Natural killer cell (primary cell): ENCODE measurements at regions of chr1 and their contacts with region 1.

Region 1: GRCh38 chr1:162056043-162056442 is 13.4 kb upstream of the NOS1AP start:
- DNase-seq: peak; percentile 26 to 69
- ATAC-seq: peak; percentile 76 to 93 (median 90)
- H3K4me3 ChIP-seq: no peak overlapping the region
- H3K4me3 Mint-ChIP-seq: no peak overlapping the region
- H3K27ac ChIP-seq: no peak overlapping the region
- H3K27ac Mint-ChIP-seq: no peak overlapping the region
- H3K4me1 ChIP-seq: no peaks in the 10 kb centered on the region
- H3K4me1 Mint-ChIP-seq: no peaks in the 10 kb centered on the region
- H3K27me3 ChIP-seq: no peaks in the 10 kb centered on the region
- H3K27me3 Mint-ChIP-seq: peaks cover 0 to 11% of the 10 kb centered on the region in 2 donors
- CTCF ChIP-seq: peak; percentile 75

Region 2: GRCh38 chr1:162276493-162276892 is 220.4 kb after region 1 on chr1:
- intact Hi-C with region 1: loop called (anchors 1 kb)
- DNase-seq: peak in 1 of 2 donors; percentile 9
- ATAC-seq: no peak
- H3K4me3 ChIP-seq: no peak overlapping the region
- H3K4me3 Mint-ChIP-seq: no peak overlapping the region
- H3K27ac ChIP-seq: no peak overlapping the region
- H3K27ac Mint-ChIP-seq: no peak overlapping the region
- H3K4me1 ChIP-seq: no peaks in the 10 kb centered on the region
- H3K4me1 Mint-ChIP-seq: no peaks in the 10 kb centered on the region
- H3K27me3 ChIP-seq: no peaks in the 10 kb centered on the region
- H3K27me3 Mint-ChIP-seq: peaks cover 8 to 10% of the 10 kb centered on the region in 2 donors
- CTCF ChIP-seq: no peak

Region 3: GRCh38 chr1:162391790-162392563 is 335.9 kb after region 1 on chr1:
- intact Hi-C with region 1: loop called (anchors 1 kb)
- DNase-seq: peak in 1 of 2 donors; percentile 45
- ATAC-seq: peak in 2 of 3 donors; percentile 62 to 77
- H3K4me3 ChIP-seq: no peak overlapping the region
- H3K4me3 Mint-ChIP-seq: no peak overlapping the region
- H3K27ac ChIP-seq: no peak overlapping the region
- H3K27ac Mint-ChIP-seq: peak overlapping the region; percentile 83 to 89
- H3K4me1 ChIP-seq: peaks cover 30% of the 10 kb centered on the region
- H3K4me1 Mint-ChIP-seq: peaks cover 60 to 67% of the 10 kb centered on the region in 2 donors
- H3K27me3 ChIP-seq: no peaks in the 10 kb centered on the region
- H3K27me3 Mint-ChIP-seq: no peaks in the 10 kb centered on the region
- CTCF ChIP-seq: peak; percentile 73

Region 4: DNA sequence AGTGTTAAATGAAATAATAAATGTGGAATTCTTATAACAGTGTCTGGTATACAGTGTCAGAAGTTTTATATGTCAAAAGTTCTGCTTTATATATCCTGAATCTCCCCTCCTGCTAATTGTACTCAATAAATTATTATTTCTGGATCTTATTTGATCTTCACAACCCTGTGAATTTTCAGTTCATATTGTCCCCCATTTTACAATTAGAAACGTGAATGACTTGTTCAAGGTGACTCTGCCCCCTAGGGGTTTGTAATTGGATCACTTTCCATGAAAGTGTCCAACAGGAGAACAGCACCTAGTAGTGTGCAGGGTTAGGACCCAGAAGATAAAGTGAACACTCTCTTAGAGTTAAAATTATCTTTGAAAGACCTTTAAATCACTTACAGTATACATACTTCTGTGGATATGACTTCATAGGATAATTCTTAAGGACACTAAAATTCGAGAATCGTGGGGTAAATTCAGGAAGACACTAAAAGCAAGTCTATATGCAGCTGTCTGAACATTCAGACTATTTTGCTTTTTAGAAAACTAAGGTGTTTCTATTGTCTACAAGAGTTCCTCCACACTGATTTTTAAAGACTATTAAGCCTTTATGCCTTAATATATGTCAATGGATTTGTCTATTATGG is 571.7 kb after region 1 on chr1:
- intact Hi-C with region 1: loop called (anchors 1 kb)
- DNase-seq: peak in 1 of 2 donors; percentile 42
- ATAC-seq: peak in 2 of 3 donors; percentile 36 to 49
- H3K4me3 ChIP-seq: no peak overlapping the region
- H3K4me3 Mint-ChIP-seq: no peak overlapping the region
- H3K27ac ChIP-seq: no peak overlapping the region
- H3K27ac Mint-ChIP-seq: no peak overlapping the region
- H3K4me1 ChIP-seq: no peaks in the 10 kb centered on the region
- H3K4me1 Mint-ChIP-seq: no peaks in the 10 kb centered on the region
- H3K27me3 ChIP-seq: no peaks in the 10 kb centered on the region
- H3K27me3 Mint-ChIP-seq: peaks cover 3 to 5% of the 10 kb centered on the region in 2 donors
- CTCF ChIP-seq: peak; percentile 46

Region 5: GRCh38 chr1:163315773-163316374 is 1259.8 kb after region 1 on chr1:
- intact Hi-C with region 1: loop called (anchors 10 kb)
- DNase-seq: peak in 1 of 2 donors; percentile 74
- ATAC-seq: no peak
- H3K4me3 ChIP-seq: no peak overlapping the region
- H3K4me3 Mint-ChIP-seq: no peak overlapping the region
- H3K27ac ChIP-seq: no peak overlapping the region
- H3K27ac Mint-ChIP-seq: no peak overlapping the region
- H3K4me1 ChIP-seq: no peaks in the 10 kb centered on the region
- H3K4me1 Mint-ChIP-seq: peaks cover 3% of the 10 kb centered on the region in 2 donors
- H3K27me3 ChIP-seq: no peaks in the 10 kb centered on the region
- H3K27me3 Mint-ChIP-seq: no peaks in the 10 kb centered on the region
- CTCF ChIP-seq: peak; percentile 81